CD4-positive, alpha-beta memory T cell (primary cell): ENCODE measurements at regions of chr20 and their contacts with region 1.

Region 1: GRCh38 chr20:17569616-17570346 is at the start of gene DSTN:
- DNase-seq: peak; percentile 87 to 91 (median 90)
- H3K4me3 ChIP-seq: peak within 1 kb of the TSS; percentile 73 to 84
- H3K4me3 Mint-ChIP-seq: peak within 1 kb of the TSS; percentile 94 to 97 (median 96)
- H3K27ac ChIP-seq: peak within 1 kb of the TSS; percentile 83
- H3K27ac Mint-ChIP-seq: peak within 1 kb of the TSS; percentile 70 to 97 (median 96)
- H3K4me1 ChIP-seq: peaks cover 35% of the 10 kb centered on the region
- H3K4me1 Mint-ChIP-seq: peaks cover 23 to 37% (median 28%) of the 10 kb centered on the region in 4 donors
- H3K27me3 ChIP-seq: no peaks in the 10 kb centered on the region
- H3K27me3 Mint-ChIP-seq: no peaks in the 10 kb centered on the region
- total RNA-seq, gene DSTN: 43.1 to 49.1 TPM

Region 2: DNA sequence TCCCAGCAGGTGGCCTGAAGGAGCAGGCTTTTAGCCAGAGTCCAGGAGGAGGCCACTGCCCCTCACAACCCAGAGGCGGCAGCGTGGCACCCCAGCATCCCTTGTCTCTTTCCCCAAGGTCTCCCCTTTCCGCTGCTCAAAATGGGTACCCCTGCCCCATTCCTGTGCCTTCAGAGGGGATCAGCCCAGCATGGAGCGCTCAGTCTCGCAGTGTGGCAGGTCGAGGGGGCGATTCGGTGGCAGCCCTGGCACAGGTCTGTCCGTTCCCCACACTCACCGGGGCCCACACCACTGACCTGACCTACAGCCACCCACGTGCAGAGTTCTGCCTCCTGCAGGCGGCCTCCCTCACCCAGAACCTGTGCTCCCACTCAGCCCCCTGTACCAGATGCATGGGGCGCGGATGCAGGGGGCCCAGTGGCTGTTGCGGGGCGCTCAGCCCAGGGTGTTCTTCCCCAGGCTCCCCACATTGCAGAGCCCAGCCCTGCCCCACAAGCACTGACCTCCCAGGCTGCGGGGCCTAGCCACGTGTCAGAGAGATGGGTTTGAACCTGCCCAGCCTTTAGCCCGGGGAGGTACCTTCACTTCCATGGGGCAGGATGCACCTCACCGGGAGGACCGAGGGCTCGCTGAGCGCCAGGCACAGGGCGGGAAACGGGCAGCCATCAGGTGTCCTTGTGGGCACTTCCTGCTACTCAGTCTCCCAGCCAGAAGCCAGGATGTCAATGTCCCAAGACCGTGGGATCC is 41.9 kb after region 1 on chr20:
- CTCF ChIA-PET with region 1: interaction called, 13 read pairs
- POLR2A ChIA-PET with region 1: interaction called, 63 read pairs
- intact Hi-C with region 1: loop called (anchors 1 kb)
- DNase-seq: peak in 3 of 5 donors; percentile 18 to 39 (median 22)
- H3K4me3 ChIP-seq: peak overlapping the region in 1 of 2 donors; percentile 34
- H3K4me3 Mint-ChIP-seq: peak overlapping the region in 7 of 8 donors; percentile 27 to 98 (median 79)
- H3K27ac ChIP-seq: peak overlapping the region; percentile 57
- H3K27ac Mint-ChIP-seq: peak overlapping the region; percentile 59 to 100 (median 95)
- H3K4me1 ChIP-seq: peaks cover 44% of the 10 kb centered on the region
- H3K4me1 Mint-ChIP-seq: peaks cover 25 to 48% (median 36%) of the 10 kb centered on the region in 4 donors
- H3K27me3 ChIP-seq: no peaks in the 10 kb centered on the region
- H3K27me3 Mint-ChIP-seq: no peaks in the 10 kb centered on the region

Region 3: DNA sequence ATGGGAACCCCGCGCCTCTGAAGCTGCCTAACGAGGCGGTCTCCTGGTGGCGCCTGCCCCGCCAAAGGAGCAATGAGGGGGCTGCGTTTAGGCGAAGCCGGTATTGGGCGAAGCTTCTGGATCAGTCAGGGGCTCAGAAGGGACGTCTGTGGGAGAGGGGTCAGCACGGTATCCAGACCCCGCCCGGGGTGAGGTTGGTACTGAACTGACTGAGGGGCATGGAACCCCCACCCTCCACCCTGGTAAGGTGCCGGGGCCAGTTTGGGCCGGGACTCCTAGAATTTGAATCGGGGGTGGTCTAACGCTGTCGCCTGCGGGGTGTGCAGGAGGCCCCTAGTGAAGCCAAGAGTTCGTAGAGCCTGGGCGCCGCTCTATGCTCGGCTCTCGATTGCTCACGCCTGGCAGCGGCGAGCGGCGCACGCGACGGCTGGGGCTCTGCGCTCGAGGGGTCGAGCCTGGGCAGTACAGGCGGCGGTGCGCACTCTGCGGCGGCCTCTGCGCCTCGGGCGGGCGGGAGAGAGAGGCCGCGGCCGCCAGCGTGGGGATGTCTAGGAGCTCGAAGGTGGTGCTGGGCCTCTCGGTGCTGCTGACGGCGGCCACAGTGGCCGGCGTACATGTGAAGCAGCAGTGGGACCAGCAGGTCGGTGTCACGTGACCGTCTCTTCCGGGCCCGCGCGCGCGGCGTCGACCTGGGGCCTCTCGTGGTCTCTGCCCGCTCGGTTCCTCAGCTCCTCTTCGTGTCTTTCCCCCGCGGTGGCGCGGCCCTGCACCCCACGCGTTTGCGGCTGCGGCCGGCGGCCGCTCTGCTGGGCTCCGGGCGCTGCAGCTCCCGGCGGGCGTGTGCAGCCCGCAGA is 567.9 kb after region 1 on chr20 and contains the starts of genes KAT14 and PET117:
- CTCF ChIA-PET with region 1: no interaction called
- POLR2A ChIA-PET with region 1: interaction called, 5 read pairs
- intact Hi-C with region 1: loop called (anchors 2 kb)
- DNase-seq: peak; percentile 89 to 95 (median 92)
- H3K4me3 ChIP-seq: peak within 1 kb of the TSS; percentile 71 to 87
- H3K4me3 Mint-ChIP-seq: peak within 1 kb of the TSS; percentile 88 to 94 (median 90)
- H3K27ac ChIP-seq: peak within 1 kb of the TSS; percentile 78
- H3K27ac Mint-ChIP-seq: peak within 1 kb of the TSS; percentile 89 to 96 (median 92)
- H3K4me1 ChIP-seq: peaks cover 34% of the 10 kb centered on the region
- H3K4me1 Mint-ChIP-seq: peaks cover 22 to 43% (median 30%) of the 10 kb centered on the region in 4 donors
- H3K27me3 ChIP-seq: no peaks in the 10 kb centered on the region
- H3K27me3 Mint-ChIP-seq: no peaks in the 10 kb centered on the region
- total RNA-seq, gene KAT14: 22.4 to 24.0 TPM
- total RNA-seq, gene PET117: 14.1 to 15.0 TPM